SK-N-SH (cell line): ENCODE measurements at regions of chr17 and their contacts with region 1.

Region 1: GRCh38 chr17:29116804-29117772 is 63.1 kb downstream of the MYO18A start:
- DNase-seq: peak; percentile 85
- H3K4me3 ChIP-seq: no peak overlapping the region; a peak in 1 of 4 replicates
- H3K27ac ChIP-seq: no peak overlapping the region
- H3K4me1 ChIP-seq: peaks cover 0 to 19% of the 10 kb centered on the region in 2 experiments; a peak in 1 of 4 replicates
- H3K27me3 ChIP-seq: no peaks in the 10 kb centered on the region
- CTCF ChIP-seq: peak; percentile 89
- EP300 ChIP-seq: no peak
- RAD21 ChIP-seq: peak; percentile 84

Region 2: GRCh38 chr17:28871056-28871579 is 246.0 kb before region 1 on chr17:
- CTCF ChIA-PET with region 1: no interaction called
- POLR2A ChIA-PET with region 1: no interaction called
- DNase-seq: no peak
- H3K4me3 ChIP-seq: no peak overlapping the region
- H3K27ac ChIP-seq: no peak overlapping the region
- H3K4me1 ChIP-seq: no peaks in the 10 kb centered on the region
- H3K27me3 ChIP-seq: no peaks in the 10 kb centered on the region
- CTCF ChIP-seq: no peak
- EP300 ChIP-seq: no peak
- RAD21 ChIP-seq: no peak

Region 3: DNA sequence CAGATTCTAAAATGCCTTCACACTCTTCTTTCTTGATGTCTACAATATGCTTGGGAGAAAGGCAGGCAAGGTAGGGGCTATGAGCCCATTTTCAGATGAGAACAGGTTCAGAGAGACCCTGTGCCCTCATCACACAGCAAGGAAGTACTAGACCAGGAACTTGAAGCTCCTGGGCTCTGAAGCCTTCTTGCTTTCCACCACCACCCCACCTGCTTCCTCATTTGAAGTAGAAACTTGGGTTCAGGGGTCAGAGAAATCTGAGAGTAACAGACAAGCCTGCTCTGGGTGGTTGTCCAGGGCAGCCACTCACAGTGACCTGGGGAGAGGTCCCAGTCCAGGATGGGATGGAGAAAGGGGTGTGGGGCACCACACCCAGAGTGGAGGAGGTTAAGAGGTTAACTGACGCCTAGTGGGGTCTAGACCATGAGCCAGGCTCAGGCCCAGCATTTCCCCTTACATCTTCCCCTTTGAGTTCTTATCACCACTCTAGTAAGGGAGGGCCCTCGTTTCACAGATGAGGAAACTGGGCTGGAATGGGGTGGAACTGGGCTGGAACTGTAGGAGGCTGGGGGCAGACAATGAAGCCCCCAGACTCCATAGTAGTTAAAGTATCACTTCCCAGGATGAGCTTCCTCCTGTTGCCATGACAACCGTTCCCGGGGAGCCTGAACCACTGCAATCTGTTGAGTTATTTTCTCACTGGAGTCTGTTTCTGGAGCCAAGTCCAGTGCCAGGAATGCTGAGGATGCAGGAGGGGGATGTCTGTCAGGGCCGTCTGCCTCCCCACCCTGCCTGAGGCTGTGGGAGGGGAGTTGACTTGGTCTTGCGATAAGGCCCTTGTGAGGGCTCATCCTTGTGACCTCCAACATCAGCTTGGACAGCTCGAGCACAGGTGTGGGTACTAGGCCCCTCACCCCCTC is 149.6 kb before region 1 on chr17:
- CTCF ChIA-PET with region 1: interaction called, 947 read pairs
- POLR2A ChIA-PET with region 1: interaction called, 20 read pairs
- DNase-seq: no peak
- H3K4me3 ChIP-seq: no peak overlapping the region
- H3K27ac ChIP-seq: no peak overlapping the region
- H3K4me1 ChIP-seq: peaks cover 0 to 37% of the 10 kb centered on the region in 2 experiments; a peak in 3 of 4 replicates
- H3K27me3 ChIP-seq: no peaks in the 10 kb centered on the region; the same call in 1 of the 2 replicates
- CTCF ChIP-seq: no peak
- EP300 ChIP-seq: no peak
- RAD21 ChIP-seq: no peak

Region 4: GRCh38 chr17:29005936-29006511 is 111.1 kb before region 1 on chr17 and contains the start of gene SEZ6:
- CTCF ChIA-PET with region 1: interaction called, 53 read pairs
- POLR2A ChIA-PET with region 1: no interaction called
- DNase-seq: peak; percentile 94
- H3K4me3 ChIP-seq: peak within 1 kb of the TSS in 1 of 2 experiments; percentile 43; a peak in 3 of 4 replicates
- H3K27ac ChIP-seq: peak within 1 kb of the TSS in 1 of 2 experiments; percentile 28; a peak in 1 of 4 replicates
- H3K4me1 ChIP-seq: peaks cover 7 to 27% of the 10 kb centered on the region in 2 experiments; a peak in 2 of 4 replicates
- H3K27me3 ChIP-seq: peaks cover 35% of the 10 kb centered on the region
- CTCF ChIP-seq: no peak
- EP300 ChIP-seq: peak; percentile 9 to 25; a peak in 1 of 4 replicates
- RAD21 ChIP-seq: no peak
- polyA plus RNA-seq, gene SEZ6: 0.12 and 0.37 TPM in 2 replicates

Region 5: DNA sequence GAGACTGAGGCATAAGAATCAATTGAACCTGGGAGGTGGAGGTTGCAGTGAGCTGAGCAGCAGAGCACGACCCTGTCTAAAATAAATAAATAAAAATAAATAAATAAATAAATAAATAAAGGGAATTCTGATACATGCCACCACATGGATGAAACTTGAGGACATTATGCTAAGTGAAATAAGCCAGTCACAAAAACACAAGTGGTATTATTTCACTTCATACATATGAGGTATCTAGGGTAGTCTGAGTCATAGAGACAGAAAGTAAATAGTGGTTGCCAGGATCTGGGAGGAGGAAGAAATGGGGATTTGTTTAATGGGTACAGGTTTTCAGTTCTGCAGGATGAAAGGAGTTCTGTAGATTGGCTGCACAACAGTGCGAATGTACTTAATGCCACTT is 57.8 kb before region 1 on chr17:
- CTCF ChIA-PET with region 1: interaction called, 16 read pairs
- POLR2A ChIA-PET with region 1: no interaction called
- DNase-seq: no peak
- H3K4me3 ChIP-seq: no peak overlapping the region
- H3K27ac ChIP-seq: no peak overlapping the region
- H3K4me1 ChIP-seq: peaks cover 7 to 45% of the 10 kb centered on the region in 2 experiments; a peak in 3 of 4 replicates
- H3K27me3 ChIP-seq: no peaks in the 10 kb centered on the region
- CTCF ChIP-seq: no peak
- EP300 ChIP-seq: no peak
- RAD21 ChIP-seq: no peak

Region 6: GRCh38 chr17:29133146-29133713 is 16.1 kb after region 1 on chr17:
- CTCF ChIA-PET with region 1: interaction called, 535 read pairs
- POLR2A ChIA-PET with region 1: no interaction called
- DNase-seq: no peak
- H3K4me3 ChIP-seq: no peak overlapping the region
- H3K27ac ChIP-seq: peak overlapping the region; percentile 50 to 62; a peak in 2 of 4 replicates
- H3K4me1 ChIP-seq: peaks cover 20 to 27% of the 10 kb centered on the region in 2 experiments
- H3K27me3 ChIP-seq: no peaks in the 10 kb centered on the region
- CTCF ChIP-seq: no peak
- EP300 ChIP-seq: no peak
- RAD21 ChIP-seq: no peak

Region 7: DNA sequence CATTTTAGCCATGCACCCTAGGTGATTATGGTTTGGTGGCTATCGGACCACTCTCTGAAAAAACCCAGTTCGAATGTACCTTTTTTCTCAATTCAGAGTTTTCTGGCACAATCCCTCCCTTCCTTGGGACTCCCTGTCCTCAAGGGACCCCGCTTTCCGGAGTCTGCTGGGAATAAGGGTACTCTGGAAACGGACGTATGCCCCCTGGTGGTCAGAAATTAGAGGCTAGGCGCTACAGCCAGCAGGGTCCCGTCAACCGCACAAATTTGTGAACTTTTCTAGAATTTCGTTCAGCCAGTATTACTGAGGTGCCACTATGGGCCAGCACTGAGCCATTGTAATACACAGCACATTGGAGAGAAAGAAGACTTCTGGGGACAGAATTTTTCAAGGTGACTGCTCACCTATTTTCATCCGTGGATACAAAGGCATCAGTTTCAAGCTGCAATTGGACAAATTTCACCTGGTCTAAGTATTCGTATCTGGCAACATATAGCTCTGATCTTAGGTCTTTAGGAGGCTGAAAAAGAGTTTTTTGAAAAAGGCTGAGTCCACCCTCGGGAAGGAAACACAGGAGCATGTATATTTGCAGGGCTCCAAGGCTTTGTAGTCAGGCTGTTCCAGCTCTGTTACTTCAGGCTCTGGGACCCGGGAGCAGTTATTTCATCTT is 102.4 kb after region 1 on chr17:
- CTCF ChIA-PET with region 1: interaction called, 18 read pairs
- POLR2A ChIA-PET with region 1: no interaction called
- DNase-seq: peak; percentile 86
- H3K4me3 ChIP-seq: peak overlapping the region in 1 of 2 experiments; percentile 17; a peak in 1 of 4 replicates
- H3K27ac ChIP-seq: no peak overlapping the region
- H3K4me1 ChIP-seq: peaks cover 0 to 6% of the 10 kb centered on the region in 2 experiments; a peak in 1 of 4 replicates
- H3K27me3 ChIP-seq: no peaks in the 10 kb centered on the region
- CTCF ChIP-seq: peak; percentile 97
- EP300 ChIP-seq: no peak; a peak in 1 of 4 replicates
- RAD21 ChIP-seq: peak; percentile 75